ENCODE measurements at regions of chr10 and their contacts with region 1.

Region 1: DNA sequence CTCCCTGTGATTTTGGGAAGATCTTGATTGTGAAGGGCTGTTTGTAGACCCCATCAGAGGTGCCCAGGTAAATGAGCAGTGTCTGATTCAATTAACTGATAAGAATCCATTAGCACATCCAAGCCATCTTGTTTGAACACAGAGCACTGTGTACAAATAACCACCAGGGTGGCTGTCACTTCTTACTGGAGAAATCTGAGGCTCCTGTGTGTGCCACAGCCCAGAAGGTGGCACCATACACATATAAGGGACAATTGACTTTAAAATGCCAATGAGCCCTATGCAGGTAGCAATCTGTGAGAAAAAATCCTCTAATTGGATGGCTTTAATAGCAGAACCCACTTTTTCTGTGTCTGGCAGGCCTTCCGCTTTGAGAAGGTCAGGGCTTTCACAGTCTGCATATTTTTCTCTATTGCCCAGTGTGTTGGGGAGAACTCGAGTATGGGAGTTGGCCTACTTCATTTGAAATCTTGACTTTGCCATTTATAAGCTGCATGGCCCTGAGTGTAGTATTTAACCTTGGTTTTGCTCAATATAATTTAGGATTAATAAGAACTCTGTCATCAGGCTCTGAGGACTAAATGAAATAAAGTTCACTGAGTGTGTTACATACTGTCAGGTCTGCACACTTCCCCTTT is 517.4 kb downstream of the CCSER2 start:
- DNase-seq: no peak
- H3K4me3 ChIP-seq: no peak overlapping the region
- H3K27ac ChIP-seq: no peak overlapping the region
- H3K4me1 ChIP-seq: no peaks in the 10 kb centered on the region
- H3K27me3 ChIP-seq: no peaks in the 10 kb centered on the region
- CTCF ChIP-seq: peak in 1 of 2 donors; percentile 7
- POLR2A ChIP-seq: no peak

Region 2: GRCh38 chr10:85147346-85148250 is 301.9 kb after region 1 on chr10:
- CTCF ChIA-PET with region 1: no interaction called
- POLR2A ChIA-PET with region 1: no interaction called
- dilution Hi-C with region 1: no loop called
- intact Hi-C with region 1: no loop called
- DNase-seq: no peak
- H3K4me3 ChIP-seq: no peak overlapping the region
- H3K27ac ChIP-seq: no peak overlapping the region
- H3K4me1 ChIP-seq: no peaks in the 10 kb centered on the region
- H3K27me3 ChIP-seq: no peaks in the 10 kb centered on the region
- CTCF ChIP-seq: no peak
- POLR2A ChIP-seq: no peak

Region 3: DNA sequence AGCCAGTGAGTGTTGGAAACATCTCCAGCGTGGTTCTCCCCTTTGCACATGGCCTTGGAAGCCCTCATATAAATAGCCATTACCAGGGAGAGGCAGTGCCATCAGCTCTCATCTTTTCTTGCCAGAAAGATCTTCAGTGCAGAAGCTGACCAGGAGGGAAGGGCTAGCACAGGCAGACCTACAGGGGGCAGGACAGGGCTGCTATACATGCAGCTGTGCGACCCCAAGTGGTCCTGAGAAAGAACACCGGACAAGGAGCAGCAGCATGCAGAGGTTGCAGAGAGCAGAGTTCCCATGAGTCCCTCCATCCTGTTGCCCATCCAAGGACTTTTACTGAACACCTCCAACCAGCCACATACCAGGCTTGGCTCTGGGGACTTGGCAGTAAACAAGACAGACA is 1503.7 kb after region 1 on chr10:
- CTCF ChIA-PET with region 1: no interaction called
- POLR2A ChIA-PET with region 1: no interaction called
- dilution Hi-C with region 1: no loop called
- intact Hi-C with region 1: loop called (anchors 10 kb)
- DNase-seq: peak; percentile 21
- H3K4me3 ChIP-seq: no peak overlapping the region
- H3K27ac ChIP-seq: no peak overlapping the region
- H3K4me1 ChIP-seq: no peaks in the 10 kb centered on the region
- H3K27me3 ChIP-seq: no peaks in the 10 kb centered on the region
- CTCF ChIP-seq: peak; percentile 41 to 67
- POLR2A ChIP-seq: no peak